ENCODE measurements at regions of chr22 and their contacts with region 1.

Region 1: DNA sequence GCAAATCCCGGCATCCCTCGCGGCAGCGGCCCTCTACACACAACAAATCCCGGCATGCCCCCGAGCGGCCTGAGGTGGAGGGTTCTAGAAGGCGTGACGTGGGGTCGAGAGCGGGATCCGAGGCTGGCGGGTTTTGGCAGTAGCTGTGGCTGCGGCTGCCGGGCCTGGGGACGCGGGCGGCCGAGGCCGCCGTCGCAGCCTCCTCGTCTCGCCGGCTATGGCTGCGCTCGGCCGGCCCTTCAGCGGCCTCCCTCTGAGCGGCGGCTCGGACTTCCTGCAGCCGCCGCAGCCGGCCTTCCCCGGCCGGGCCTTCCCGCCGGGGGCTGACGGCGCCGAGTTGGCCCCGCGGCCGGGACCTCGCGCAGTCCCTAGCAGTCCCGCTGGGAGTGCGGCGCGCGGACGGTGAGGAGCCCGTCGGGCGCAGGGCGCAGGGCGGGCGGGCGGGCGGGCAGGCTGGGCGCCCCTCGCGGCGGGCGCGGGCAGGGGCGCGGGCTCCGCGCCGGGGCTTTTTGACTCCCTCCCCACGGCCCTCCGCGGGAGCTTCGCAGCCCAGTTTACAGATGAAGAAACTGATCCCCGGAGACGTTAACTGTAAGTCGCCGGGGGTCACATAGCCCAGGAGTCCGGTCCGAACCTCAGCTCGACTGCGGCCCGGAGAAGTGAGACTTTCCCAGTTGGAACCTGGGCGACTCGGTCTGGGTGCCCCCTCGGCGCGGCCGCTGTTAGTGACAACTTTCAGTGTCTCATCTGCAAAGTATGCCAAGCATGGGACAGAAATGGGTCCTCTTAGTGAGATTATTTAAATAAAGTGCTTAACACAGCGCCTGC is at the start of gene CCDC117:
- DNase-seq: peak; percentile 94
- CTCF ChIP-seq: peak; percentile 26

Region 2: GRCh38 chr22:28783786-28784671 is 11.2 kb after region 1 on chr22:
- CTCF ChIA-PET with region 1: interaction called, 14 read pairs
- POLR2A ChIA-PET with region 1: interaction called, 11 read pairs
- DNase-seq: no peak
- CTCF ChIP-seq: no peak

Region 3: DNA sequence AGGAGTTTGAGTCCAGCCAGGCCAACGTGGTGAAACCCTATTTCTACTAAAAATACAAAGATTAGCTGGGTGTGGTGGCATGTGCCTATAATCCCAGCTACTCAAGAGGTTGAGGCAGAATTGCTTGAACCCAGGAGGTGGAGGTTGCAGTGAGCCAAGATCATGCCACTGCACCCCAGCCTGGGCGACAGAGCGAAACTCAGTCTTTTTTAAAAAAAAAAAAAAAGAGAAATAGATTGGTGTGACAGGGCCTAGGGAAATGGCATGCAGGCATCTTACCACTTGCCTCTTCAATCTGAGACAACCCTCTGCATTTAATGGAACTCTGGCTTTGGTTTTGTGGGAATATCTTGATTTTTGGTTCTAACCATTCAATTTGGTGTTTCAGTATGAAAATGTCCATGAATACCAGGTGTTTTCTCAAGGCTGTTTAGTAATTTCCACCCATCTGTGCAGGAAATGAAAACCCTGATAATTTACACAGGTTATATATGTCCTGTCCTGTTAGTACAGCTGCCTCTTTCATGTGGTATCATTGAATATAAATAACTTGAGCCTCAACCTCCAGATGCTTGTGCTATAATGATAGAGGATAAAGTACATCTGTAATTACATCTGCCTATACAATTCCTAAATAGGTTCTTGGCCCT is 19.1 kb after region 1 on chr22:
- CTCF ChIA-PET with region 1: interaction called, 13 read pairs
- POLR2A ChIA-PET with region 1: interaction called, 11 read pairs
- DNase-seq: peak; percentile 57
- CTCF ChIP-seq: no peak

Measured in GM10248 (cell line).